Adrenal gland (tissue), 19 donors: ENCODE measurements at regions of chr16 and their contacts with region 1.

Region 1: GRCh38 chr16:74623214-74623842 is 16.4 kb upstream of the GLG1 start:
- DNase-seq: peak in 2 of 7 donors; percentile 8 to 44
- H3K4me3 ChIP-seq: no peak overlapping the region
- H3K27ac ChIP-seq: no peak overlapping the region
- H3K4me1 ChIP-seq: peaks cover 0 to 8% of the 10 kb centered on the region in 2 donors
- H3K27me3 ChIP-seq: no peaks in the 10 kb centered on the region
- CTCF ChIP-seq: peak; percentile 47 to 81 (median 70)
- POLR2A ChIP-seq: no peak

Region 2: GRCh38 chr16:74466872-74467271 is 156.5 kb before region 1 on chr16:
- intact Hi-C with region 1: loop called (anchors 10 kb)
- DNase-seq: no peak
- H3K4me3 ChIP-seq: no peak overlapping the region
- H3K27ac ChIP-seq: no peak overlapping the region
- H3K4me1 ChIP-seq: no peaks in the 10 kb centered on the region
- H3K27me3 ChIP-seq: no peaks in the 10 kb centered on the region
- CTCF ChIP-seq: no peak
- POLR2A ChIP-seq: no peak

Region 3: GRCh38 chr16:74477226-74477625 is 146.1 kb before region 1 on chr16:
- intact Hi-C with region 1: loop called in 1 of 2 experiments (anchors 10 kb)
- DNase-seq: no peak
- H3K4me3 ChIP-seq: no peak overlapping the region
- H3K27ac ChIP-seq: no peak overlapping the region
- H3K4me1 ChIP-seq: no peaks in the 10 kb centered on the region
- H3K27me3 ChIP-seq: no peaks in the 10 kb centered on the region
- CTCF ChIP-seq: no peak
- POLR2A ChIP-seq: no peak

Region 4: DNA sequence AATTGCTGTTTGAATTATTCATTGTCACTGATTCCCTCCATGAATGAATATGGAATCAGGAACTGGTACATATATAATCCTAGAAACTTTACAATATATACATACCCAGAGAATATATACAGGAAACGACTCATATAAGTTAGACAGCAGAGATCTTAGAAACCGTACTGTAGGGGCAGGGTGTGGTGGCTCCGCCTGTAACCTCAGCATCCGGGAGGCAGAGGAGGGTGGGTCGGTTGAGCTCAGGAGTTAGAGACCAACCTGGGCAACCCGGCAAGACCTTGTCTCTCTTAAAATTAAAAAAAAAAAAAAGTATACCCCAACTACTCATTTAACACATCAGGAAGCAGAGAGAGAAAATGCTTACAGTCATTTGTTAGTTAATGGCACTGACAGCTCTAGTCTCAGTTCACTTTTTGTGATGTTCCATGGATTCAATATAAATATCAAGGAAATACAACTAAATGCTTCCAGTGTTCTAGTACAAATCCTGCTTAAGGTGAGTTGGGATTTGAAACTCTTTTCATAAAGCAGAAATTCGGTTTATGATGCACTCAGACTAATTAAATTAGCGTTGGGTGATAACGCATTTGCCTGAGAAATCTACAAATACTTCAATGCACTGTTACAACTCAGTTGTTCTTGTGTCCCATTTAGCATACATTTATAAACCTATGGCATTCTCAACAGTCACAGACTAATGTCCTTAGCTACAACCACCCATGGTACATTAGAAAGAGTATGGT is 22.0 kb before region 1 on chr16:
- intact Hi-C with region 1: no loop called
- DNase-seq: no peak
- H3K4me3 ChIP-seq: no peak overlapping the region
- H3K27ac ChIP-seq: peak overlapping the region in 1 of 5 donors; percentile 5
- H3K4me1 ChIP-seq: peaks cover 29 to 54% of the 10 kb centered on the region in 2 donors
- H3K27me3 ChIP-seq: no peaks in the 10 kb centered on the region
- CTCF ChIP-seq: no peak
- POLR2A ChIP-seq: no peak

Region 5: DNA sequence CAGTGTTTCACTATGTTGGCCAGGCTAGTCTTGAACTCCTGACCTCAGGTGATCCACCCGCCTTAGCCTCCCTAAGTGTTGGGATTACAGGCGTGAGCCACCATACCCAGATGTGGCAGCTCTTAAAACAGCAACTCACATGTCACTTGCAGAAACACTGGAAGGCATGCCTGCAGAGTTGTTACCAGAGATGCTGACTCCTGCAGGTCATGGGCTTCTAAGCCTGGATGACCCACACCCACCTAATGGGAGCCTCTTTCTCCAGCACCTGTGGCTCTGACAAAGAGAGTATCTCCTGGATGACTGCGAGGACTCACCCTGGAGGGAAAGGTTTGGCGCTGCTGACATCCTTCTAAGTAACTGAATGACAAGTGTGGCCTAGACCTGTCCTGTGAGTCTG is 54.5 kb after region 1 on chr16:
- intact Hi-C with region 1: no loop called
- DNase-seq: no peak
- H3K4me3 ChIP-seq: no peak overlapping the region
- H3K27ac ChIP-seq: no peak overlapping the region
- H3K4me1 ChIP-seq: no peaks in the 10 kb centered on the region
- H3K27me3 ChIP-seq: no peaks in the 10 kb centered on the region
- CTCF ChIP-seq: no peak
- POLR2A ChIP-seq: no peak